Posterior vena cava (tissue), 2 donors: ENCODE measurements at regions of chr9 and their contacts with region 1.

Region 1: GRCh38 chr9:36328798-36329411 is 70.7 kb upstream of the GNE start:
- DNase-seq: no peak

Region 2: GRCh38 chr9:36204906-36205547 is 123.9 kb before region 1 on chr9:
- intact Hi-C with region 1: loop called in 1 of 2 experiments (anchors 10 kb)
- DNase-seq: no peak

Region 3: DNA sequence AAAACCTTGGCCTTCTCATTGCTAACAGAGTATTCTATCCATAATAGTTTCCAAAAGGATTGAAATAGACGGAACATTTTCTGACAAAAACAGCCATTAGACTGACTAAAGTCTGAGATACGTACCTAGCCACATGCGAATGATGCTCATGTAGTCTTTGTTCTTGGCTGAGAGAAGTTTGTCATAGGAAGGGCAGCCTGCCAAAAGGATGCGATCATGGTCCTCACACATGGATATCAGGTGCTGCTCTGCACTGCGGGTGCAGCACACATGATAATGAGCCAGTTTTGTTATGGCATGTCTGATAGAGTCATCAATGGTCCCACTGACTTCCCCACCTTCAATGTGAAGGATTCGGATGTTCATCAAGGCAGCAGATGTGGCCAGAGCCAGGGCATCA is 83.0 kb before region 1 on chr9:
- intact Hi-C with region 1: loop called in 1 of 2 experiments (anchors 10 kb)
- DNase-seq: no peak